ENCODE measurements at regions of chr5 and their contacts with region 1.

Region 1: DNA sequence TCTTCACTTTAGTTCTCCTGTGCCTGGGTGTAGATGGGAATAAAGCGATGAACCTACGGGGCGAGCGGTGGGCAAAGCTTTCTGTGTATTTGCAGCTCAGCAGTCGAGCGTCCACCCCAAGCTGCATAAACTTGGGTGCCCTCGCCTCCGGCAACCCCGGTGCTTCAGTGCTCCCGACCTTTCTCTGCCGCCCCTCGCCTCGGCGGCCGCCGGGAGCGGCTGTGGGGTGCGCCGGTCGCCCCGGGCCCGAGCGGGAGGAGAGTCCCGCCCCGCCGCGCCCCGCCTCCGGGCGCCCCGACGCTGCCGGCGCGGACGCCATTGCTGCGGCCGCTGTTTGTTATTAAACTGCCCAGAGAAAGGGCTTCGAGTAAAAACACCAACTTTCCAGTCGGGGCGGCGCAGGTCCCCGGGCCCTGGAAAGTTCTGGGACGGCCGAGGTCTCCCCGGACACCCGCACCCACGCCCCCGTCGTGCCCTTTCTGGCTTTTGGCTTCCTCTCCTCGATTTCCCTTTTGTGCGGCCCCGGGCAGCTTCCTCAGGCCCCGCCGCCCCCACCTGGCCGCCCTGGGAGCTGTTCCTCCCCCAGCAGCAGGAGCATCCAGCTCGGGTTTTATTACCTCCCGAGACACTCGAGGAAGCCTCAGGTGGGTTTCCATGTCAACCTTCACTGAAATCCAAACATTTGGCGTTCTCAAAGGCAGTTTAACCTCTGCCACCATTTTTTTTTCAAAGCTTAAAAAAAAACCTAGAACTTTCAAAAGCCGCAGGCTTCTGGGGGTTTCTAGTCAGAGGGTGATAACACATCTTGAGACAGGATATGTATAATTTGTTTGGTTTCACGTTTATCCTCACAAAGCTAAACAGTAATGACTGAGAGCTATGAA is 334.3 kb downstream of the CWC27 start:
- DNase-seq: peak; percentile 84
- ATAC-seq: peak; percentile 93

Region 2: DNA sequence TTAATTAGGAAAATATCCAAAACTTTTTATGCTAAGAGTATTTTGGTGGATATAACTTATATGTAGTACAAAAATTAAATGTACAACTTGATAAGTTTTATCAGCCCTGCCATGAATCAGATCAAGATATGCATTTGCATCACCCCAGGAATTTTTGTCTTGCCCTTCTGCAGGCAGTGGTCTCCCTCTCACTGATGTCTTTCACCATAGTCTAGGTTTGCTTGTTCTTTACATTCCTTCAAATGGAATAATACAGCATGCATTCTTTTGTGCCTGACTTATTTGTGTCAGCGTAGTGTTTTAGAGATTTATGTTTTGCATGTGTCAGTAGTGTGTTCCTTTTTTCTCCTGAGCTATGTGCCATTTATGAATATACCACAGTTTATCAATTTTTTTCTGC is 901.1 kb before region 1 on chr5:
- intact Hi-C with region 1: no loop called
- DNase-seq: no peak
- ATAC-seq: no peak

Region 3: GRCh38 chr5:64811050-64811640 is 291.9 kb before region 1 on chr5:
- intact Hi-C with region 1: loop called (anchors 10 kb)
- DNase-seq: no peak
- ATAC-seq: peak; percentile 71

Region 4: GRCh38 chr5:64971513-64971912 is 131.6 kb before region 1 on chr5:
- intact Hi-C with region 1: loop called (anchors 10 kb)
- DNase-seq: no peak
- ATAC-seq: no peak

Region 5: DNA sequence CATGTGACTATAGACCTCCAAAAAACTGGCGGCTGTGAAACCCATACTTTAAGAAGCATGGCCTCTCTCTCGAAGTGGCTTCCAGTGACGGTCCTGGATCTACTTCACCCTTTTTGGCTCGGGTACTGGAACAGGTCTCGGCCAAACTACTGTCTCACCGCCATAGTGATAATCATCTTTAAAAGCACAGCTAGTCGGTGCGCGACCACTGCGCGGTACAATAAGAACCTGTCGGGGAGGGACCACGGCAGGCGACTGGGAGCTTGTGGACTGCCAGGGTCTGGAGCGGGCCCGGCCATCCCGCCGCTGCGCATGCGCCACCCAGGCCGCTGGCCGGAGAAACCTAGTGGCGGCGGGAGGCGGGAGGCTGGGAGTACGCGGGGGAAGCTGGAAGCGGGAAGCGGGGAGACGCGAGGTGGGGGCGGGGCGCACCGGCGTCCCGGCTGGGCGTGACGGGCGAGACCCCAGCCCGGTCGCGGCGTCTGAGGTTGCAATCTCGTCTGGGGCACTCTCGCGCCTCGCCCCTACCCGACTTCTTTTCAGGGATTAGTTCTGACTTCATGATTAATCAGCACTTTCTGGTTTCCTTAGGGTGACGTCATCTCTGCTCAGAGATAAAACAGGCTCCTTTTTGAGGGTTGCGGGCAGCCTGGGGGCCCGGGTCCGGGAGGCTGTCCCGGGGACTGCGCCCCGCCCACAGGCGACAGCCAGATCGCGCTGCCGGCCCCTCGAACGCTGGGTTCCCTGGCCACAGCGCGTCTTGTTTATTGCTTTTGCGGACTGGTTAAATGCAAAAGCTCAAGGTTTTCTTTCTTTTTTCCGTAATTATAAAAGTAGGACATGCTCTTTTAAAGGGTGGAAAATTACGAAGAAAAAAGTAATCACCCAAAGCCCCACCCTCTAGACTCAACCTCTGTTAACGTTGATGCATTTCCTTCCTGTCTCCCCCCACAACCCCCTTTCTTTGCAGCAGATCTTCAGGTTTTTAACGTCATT is 67.6 kb before region 1 on chr5:
- intact Hi-C with region 1: loop called (anchors 5 kb)
- DNase-seq: peak; percentile 93
- ATAC-seq: peak; percentile 98

Region 6: DNA sequence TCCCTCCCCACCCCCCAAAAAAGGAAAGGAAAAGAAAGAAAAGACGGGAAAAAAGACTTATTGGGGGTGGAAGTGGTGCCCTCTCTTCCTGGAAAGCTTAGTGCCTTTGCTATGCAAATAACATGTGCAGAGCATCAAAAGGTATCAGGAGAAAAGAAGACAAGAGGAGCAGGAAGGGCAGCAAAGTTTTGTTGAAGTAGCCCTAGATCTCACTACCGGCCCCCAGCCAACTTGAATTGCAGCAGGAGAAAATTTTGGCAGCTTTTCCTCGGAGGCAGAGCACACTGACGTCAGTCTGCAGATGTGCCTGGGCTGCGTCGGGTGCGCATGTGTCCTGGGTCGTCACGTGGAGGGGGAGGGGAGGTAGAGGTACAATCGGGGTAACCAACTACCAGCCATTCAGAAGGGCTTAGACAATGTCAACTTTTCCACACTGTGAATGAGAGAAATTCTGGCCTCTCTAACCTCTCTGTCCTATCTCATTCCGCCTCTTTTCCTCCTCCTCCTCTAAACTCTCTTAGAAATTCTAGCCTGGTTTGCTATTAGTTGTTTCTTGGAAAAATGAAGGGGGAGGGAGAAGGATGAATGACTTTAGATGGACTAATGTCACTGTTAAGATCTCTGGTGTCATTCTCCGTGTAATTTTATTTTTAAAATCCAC is 378.7 kb after region 1 on chr5 and contains the start of gene ADAMTS6:
- intact Hi-C with region 1: loop called (anchors 5 kb)
- DNase-seq: peak; percentile 94
- ATAC-seq: peak; percentile 95
- total RNA-seq, gene ADAMTS6: 0.78 TPM

Measured in Right ventricle myocardium superior (tissue), 1 donor.